ENCODE measurements at regions of chr9 and their contacts with region 1.

Region 1: DNA sequence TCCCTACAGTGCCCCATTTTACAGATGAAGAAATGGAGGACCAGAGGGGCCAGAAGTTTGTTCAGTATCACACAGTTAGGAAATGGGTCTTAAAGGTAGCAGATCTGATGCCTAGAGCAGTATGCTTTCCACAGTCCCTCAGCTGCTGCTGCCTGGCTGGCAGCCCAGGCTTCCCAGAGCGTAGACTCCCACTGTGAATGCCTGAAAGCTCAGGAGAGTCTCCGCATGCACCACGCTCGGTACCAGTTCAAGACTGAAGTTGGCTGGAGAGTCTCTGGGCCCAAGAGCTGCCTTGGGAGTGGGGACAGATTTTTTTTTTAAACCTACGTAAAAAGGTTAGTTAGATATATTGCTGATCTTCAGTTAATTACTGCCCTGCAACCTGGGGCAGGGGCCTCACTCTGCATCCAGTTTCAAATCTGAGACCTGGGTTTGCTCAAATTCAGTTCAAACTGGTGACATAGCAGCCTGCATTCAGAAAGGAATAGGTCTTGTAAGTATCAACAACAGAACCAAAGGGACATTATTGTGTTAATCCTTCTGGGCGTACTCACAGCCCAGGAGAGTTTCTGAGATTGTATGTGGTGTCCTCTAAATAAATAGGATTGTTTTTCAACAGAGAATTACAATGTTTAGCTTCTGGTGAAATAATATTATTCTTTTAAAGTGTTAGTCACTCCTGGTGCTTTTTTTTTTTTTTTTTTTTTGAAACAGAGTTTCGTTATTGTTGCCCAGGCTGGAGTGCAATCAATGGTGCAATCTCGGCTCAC is 8.3 kb downstream of the NANS start:
- DNase-seq: no peak
- ATAC-seq: no peak
- H3K4me3 ChIP-seq: no peak overlapping the region
- H3K27ac ChIP-seq: no peak overlapping the region
- H3K4me1 ChIP-seq: peaks cover 6% of the 10 kb centered on the region
- H3K27me3 ChIP-seq: no peaks in the 10 kb centered on the region
- CTCF ChIP-seq: no peak
- POLR2A ChIP-seq: no peak

Region 2: DNA sequence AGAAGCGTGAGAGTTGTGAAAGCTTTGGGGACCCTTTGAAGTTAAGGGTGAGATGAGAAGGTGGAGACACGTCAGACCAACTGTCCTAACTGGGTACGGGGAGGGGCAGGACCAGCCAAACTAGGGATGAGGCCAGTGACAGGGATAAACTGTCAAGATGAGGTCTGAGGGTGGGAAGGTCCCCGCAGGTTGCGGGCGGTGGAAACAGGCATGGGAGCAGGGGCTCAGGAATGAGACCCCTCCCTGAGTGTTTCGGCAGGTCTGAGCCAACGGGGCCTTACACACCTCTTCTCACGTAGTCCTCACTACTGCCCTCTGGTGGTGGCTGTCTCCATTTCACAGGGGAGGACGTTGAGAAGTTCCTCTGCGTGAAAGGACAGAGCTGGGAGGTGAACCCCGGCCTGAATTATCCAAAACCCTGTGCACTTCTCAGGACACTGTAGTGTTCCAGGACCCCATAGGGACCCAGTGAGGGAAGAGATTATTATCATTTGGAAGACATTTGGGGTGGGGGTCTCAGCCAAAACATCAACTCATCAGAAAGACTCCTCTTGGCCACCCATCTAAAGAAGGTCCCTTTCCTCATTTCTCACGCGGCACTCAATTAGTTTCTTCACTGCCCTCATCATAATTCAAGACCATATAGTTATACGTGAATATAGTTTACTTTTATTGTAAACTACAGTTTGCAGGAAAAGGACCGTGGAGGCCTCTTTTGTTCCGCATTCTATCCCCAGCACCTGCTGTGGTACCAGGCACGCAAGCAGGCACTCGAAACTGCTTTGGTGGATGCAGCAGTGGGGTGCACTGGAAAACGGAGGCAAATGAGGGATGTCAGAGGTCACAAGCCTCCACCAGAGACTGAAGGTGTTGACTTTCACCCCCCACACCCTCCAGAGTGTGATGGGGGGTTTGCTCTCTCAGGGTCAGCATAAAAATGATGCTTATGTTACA is 29.9 kb before region 1 on chr9:
- intact Hi-C with region 1: no loop called
- DNase-seq: peak; percentile 85 to 89 (median 88)
- ATAC-seq: peak; percentile 84
- H3K4me3 ChIP-seq: no peak overlapping the region
- H3K27ac ChIP-seq: no peak overlapping the region
- H3K4me1 ChIP-seq: peaks cover 6% of the 10 kb centered on the region
- H3K27me3 ChIP-seq: no peaks in the 10 kb centered on the region
- CTCF ChIP-seq: peak; percentile 69 to 80 (median 74)
- POLR2A ChIP-seq: no peak

Region 3: GRCh38 chr9:98255578-98256296 is 190.9 kb after region 1 on chr9 and contains the start of gene TBC1D2:
- intact Hi-C with region 1: loop called (anchors 5 kb)
- DNase-seq: peak; percentile 98 to 100 (median 98)
- ATAC-seq: peak; percentile 95
- H3K4me3 ChIP-seq: peak within 1 kb of the TSS; percentile 77 to 93
- H3K27ac ChIP-seq: peak within 1 kb of the TSS; percentile 89 to 94 (median 92)
- H3K4me1 ChIP-seq: peaks cover 20% of the 10 kb centered on the region
- H3K27me3 ChIP-seq: no peaks in the 10 kb centered on the region
- CTCF ChIP-seq: peak in 4 of 7 experiments; percentile 23 to 50 (median 31)
- POLR2A ChIP-seq: peak in 2 of 3 donors; percentile 74 to 84
- total RNA-seq, gene TBC1D2: 3.3 to 4.7 TPM

Region 4: GRCh38 chr9:98707166-98708102 is 642.6 kb after region 1 on chr9:
- intact Hi-C with region 1: no loop called
- DNase-seq: peak in 3 of 4 donors; percentile 30 to 66 (median 51)
- ATAC-seq: peak; percentile 47
- H3K4me3 ChIP-seq: no peak overlapping the region
- H3K27ac ChIP-seq: no peak overlapping the region
- H3K4me1 ChIP-seq: peaks cover 33% of the 10 kb centered on the region
- H3K27me3 ChIP-seq: peaks cover 0 to 21% of the 10 kb centered on the region in 2 donors
- CTCF ChIP-seq: peak in 5 of 7 experiments; percentile 15 to 42 (median 24)
- POLR2A ChIP-seq: no peak

Measured in body of pancreas (tissue), 4 donors.